ENCODE measurements at regions of chr12 and their contacts with region 1.

Region 1: DNA sequence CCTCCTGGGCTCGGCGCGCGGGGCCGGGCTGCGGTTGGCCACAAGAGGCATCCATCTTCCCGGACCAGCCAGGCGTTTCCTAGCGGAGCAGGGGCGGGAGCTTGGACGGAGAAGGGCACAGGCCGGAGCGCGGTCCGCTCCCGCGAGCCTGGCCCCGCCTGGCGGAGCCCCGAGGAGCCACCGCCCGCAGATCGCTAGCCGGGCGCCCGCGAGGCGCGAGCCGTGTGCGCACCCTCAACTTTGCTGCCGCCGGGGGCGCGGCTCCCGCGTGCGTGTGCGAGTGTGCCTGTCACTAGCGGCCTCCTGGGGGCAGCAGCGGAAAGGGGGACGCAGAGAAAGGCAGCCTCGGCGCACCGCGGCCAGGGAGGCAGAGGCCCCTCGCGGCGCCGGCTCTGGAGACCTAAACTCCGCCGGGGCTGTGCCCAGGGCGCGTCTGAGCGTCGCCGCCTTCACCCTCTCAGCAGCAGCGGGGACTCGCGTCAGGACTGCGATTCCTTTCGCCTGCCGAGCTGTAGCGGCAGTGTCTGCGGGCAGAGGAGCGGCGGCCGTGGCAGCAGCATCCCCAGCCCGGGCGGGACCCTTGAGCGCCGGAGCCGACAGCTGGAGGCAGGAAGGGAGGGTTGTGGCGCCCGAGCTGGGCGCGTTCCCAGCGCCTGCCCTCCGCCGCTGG is 644 bp upstream of the SRGAP1 start:
- DNase-seq: peak; percentile 92 to 97
- ATAC-seq: peak; percentile 90 to 93
- H3K4me3 ChIP-seq: peak overlapping the region; percentile 88
- H3K27ac ChIP-seq: peak overlapping the region; percentile 97 to 98
- H3K4me1 ChIP-seq: peaks cover 27% of the 10 kb centered on the region
- CTCF ChIP-seq: peak; percentile 98
- EP300 ChIP-seq: 0 out of 5 replicates have a peak, but pooled peaks of 1 of the 2 experiments have one; percentile 38
- POLR2A ChIP-seq: no peak
- RAD21 ChIP-seq: peak; percentile 97 to 99

Region 2: DNA sequence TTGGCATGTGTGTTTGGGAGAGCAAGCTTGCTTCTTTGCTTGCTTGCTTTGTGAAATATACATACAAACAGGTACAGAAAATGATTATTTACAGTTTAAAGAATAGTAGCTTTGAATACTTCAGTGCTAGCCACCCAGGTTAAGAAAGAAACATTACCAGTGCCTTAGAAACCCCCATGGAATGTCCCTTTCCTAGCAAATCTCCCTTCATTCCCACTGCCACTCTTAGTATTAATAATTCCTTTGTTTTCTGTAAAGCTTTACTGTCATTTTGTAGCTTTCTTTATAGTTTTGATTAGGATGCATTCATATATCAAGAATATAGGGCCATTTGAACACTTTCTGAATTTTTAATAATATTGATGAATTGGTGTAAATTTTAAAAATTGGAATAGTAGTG is 10.1 kb after region 1 on chr12:
- CTCF ChIA-PET with region 1: interaction called, 33 read pairs
- POLR2A ChIA-PET with region 1: no interaction called
- DNase-seq: no peak
- ATAC-seq: no peak
- H3K4me3 ChIP-seq: no peak overlapping the region
- H3K27ac ChIP-seq: peak overlapping the region; percentile 30 to 66
- H3K4me1 ChIP-seq: peaks cover 69% of the 10 kb centered on the region
- CTCF ChIP-seq: no peak
- EP300 ChIP-seq: no peak
- POLR2A ChIP-seq: no peak
- RAD21 ChIP-seq: no peak

Region 3: GRCh38 chr12:63897931-63898330 is 54.1 kb after region 1 on chr12:
- CTCF ChIA-PET with region 1: interaction called, 12 read pairs
- POLR2A ChIA-PET with region 1: no interaction called
- DNase-seq: no peak
- ATAC-seq: no peak
- H3K4me3 ChIP-seq: no peak overlapping the region
- H3K27ac ChIP-seq: peak overlapping the region; percentile 76 to 90
- H3K4me1 ChIP-seq: peaks cover 90% of the 10 kb centered on the region
- CTCF ChIP-seq: no peak
- EP300 ChIP-seq: no peak
- POLR2A ChIP-seq: no peak
- RAD21 ChIP-seq: no peak

Region 4: GRCh38 chr12:63990828-63991547 is 147.1 kb after region 1 on chr12:
- CTCF ChIA-PET with region 1: interaction called, 13 read pairs
- POLR2A ChIA-PET with region 1: no interaction called
- DNase-seq: no peak
- ATAC-seq: no peak
- H3K4me3 ChIP-seq: no peak overlapping the region
- H3K27ac ChIP-seq: no peak overlapping the region
- H3K4me1 ChIP-seq: peaks cover 31% of the 10 kb centered on the region; the same call in 2 of the 3 replicates
- CTCF ChIP-seq: no peak
- EP300 ChIP-seq: no peak
- POLR2A ChIP-seq: no peak
- RAD21 ChIP-seq: no peak

Region 5: DNA sequence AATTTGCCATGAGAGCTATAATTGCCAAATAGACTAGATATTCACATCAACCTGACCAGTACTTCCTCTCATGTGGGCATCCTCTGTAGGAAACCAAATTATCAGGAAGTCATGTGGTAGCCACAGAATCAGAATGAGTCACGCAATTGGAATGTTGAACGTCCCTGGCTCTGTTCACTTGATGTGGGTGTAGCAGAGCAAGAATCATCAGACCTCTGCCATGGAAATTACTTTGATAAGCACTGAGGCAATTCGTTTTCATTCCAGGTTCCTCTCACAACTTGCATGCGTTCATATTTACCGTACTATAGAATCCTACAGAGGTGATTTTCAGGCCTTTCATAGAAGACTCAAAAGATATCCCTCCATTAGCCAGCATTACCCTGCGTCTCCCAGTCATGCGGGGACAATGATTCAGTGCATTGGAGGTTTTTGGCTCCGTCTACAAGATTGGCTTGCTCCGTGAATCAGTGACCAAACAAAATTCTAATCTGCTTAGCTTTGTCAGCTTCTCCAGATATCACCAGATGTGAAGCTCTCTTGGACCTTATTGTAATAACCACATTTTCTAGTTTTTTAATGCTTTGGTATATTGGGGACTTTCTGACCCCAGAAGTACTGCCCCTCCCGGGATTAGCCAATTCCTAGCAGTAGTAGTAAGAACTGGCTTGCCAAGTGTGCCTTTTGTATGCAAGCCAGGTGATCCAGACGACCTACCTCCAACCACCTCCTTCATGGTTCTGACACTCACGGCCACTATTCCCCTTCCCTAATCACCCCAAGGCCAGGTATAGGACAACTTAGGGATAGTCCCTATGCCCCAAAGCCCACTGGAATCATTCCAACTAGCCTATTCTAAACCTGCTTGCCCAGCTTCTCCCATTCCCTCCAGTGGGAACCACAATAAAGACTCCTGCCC is 244.8 kb after region 1 on chr12:
- CTCF ChIA-PET with region 1: interaction called, 43 read pairs
- POLR2A ChIA-PET with region 1: interaction called, 4 read pairs
- DNase-seq: peak; percentile 88 to 94
- ATAC-seq: peak; percentile 95 to 98
- H3K4me3 ChIP-seq: peak overlapping the region; percentile 4; the same call in 2 of the 3 replicates
- H3K27ac ChIP-seq: peak overlapping the region; percentile 91
- H3K4me1 ChIP-seq: peaks cover 63% of the 10 kb centered on the region
- CTCF ChIP-seq: no peak
- EP300 ChIP-seq: peak in 1 of 2 experiments; percentile 62; a peak in 2 of 5 replicates
- POLR2A ChIP-seq: no peak
- RAD21 ChIP-seq: peak in 1 of 2 experiments; percentile 3; a peak in 2 of 5 replicates

Region 6: GRCh38 chr12:64181504-64182291 is 337.8 kb after region 1 on chr12:
- CTCF ChIA-PET with region 1: interaction called, 48 read pairs
- POLR2A ChIA-PET with region 1: interaction called, 13 read pairs
- DNase-seq: peak; percentile 69 to 90
- ATAC-seq: peak; percentile 97 to 98
- H3K4me3 ChIP-seq: no peak overlapping the region
- H3K27ac ChIP-seq: peak overlapping the region; percentile 79 to 87
- H3K4me1 ChIP-seq: peaks cover 38% of the 10 kb centered on the region
- CTCF ChIP-seq: peak; percentile 74
- EP300 ChIP-seq: peak; percentile 28 to 37; a peak in 1 of 5 replicates
- POLR2A ChIP-seq: no peak
- RAD21 ChIP-seq: peak; percentile 79 to 84

Region 7: GRCh38 chr12:64243809-64244208 is 400.0 kb after region 1 on chr12:
- CTCF ChIA-PET with region 1: interaction called, 39 read pairs
- POLR2A ChIA-PET with region 1: no interaction called
- DNase-seq: no peak
- ATAC-seq: no peak
- H3K4me3 ChIP-seq: no peak overlapping the region
- H3K27ac ChIP-seq: no peak overlapping the region
- H3K4me1 ChIP-seq: no peaks in the 10 kb centered on the region
- CTCF ChIP-seq: no peak
- EP300 ChIP-seq: no peak
- POLR2A ChIP-seq: no peak
- RAD21 ChIP-seq: no peak

Measured in A549 (cell line).